ENCODE measurements at regions of chr4 and their contacts with region 1.

Region 1: DNA sequence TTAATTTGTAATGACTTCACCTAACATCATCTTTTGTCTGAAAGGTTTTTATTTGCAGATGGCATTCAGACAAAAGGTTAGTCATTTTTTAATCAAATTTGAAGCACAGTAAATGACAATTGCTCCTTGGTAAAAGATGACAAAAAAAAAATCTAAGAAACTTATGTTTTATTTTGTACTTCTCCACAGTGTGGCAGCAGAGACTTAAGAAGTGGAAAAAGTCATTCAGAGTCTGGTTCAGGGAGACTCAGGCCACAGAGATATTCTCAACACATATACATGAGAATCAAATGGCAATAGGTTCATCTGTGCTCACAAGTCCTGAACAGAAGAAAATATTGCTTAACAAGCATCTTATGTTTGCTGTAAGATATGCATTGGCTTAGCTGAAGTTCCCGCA is 436.2 kb downstream of the KCNIP4 start:
- DNase-seq: peak; percentile 4
- ATAC-seq: peak; percentile 53
- H3K4me3 ChIP-seq: no peak overlapping the region
- H3K27ac ChIP-seq: no peak overlapping the region
- H3K4me1 ChIP-seq: no peaks in the 10 kb centered on the region
- H3K27me3 ChIP-seq: no peaks in the 10 kb centered on the region
- CTCF ChIP-seq: peak in 2 of 3 experiments; percentile 41 to 44; a peak in 3 of 6 replicates
- POLR2A ChIP-seq: no peak
- RAD21 ChIP-seq: peak; percentile 57

Region 2: DNA sequence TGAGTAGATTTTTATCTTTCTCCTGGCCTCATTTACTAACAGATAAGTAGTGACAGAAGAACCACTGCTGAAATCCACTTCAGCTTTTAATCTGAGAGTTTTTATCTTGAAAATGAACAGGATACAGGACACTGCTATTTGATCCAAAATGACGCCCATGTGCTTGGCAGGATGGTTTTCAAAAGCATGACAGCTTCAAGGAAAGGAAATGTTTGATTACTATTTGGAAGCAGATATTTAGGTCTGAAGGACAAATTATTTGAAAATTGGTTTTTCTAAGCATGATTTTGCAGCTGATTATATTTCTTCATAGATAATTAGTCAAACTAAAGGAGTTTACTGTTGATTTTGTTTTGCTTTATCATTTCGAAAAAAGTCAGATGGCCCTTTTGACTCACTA is 801.0 kb before region 1 on chr4:
- CTCF ChIA-PET with region 1: no interaction called
- POLR2A ChIA-PET with region 1: no interaction called
- RAD21 ChIA-PET with region 1: no interaction called
- intact Hi-C with region 1: no loop called
- DNase-seq: no peak
- ATAC-seq: no peak
- H3K4me3 ChIP-seq: no peak overlapping the region
- H3K27ac ChIP-seq: no peak overlapping the region
- H3K4me1 ChIP-seq: no peaks in the 10 kb centered on the region
- H3K27me3 ChIP-seq: no peaks in the 10 kb centered on the region
- CTCF ChIP-seq: no peak
- POLR2A ChIP-seq: no peak
- RAD21 ChIP-seq: no peak

Region 3: DNA sequence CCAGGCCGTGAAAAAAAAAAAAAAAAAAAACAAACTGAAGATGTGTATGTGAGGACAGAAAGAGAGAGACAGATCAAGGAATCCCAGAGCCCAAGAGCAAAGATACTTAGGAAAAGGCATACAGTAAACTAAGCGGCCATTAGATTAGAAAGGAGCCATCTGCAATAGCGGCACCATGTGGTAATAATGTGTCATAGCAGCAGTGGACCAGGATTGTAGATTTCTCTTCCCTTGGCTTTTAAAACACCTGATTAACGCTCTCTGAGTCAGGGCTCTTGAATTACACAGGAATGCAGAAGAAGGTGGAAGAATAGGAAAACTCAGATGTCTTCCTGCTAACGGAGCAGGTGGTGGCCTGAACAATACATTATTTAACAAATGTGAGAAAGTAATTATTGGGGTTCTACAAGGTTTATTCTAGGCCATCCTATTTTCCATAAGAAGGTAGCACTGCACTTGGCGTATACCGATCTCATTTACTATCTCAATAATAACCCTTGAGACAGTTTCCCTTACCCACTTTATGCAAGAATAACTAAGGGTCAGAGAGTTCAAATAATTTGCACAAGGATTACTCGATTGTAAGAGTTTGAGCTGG is 253.6 kb after region 1 on chr4:
- CTCF ChIA-PET with region 1: no interaction called
- POLR2A ChIA-PET with region 1: no interaction called
- RAD21 ChIA-PET with region 1: no interaction called
- intact Hi-C with region 1: loop called (anchors 1 kb)
- DNase-seq: peak; percentile 18
- ATAC-seq: peak; percentile 74
- H3K4me3 ChIP-seq: no peak overlapping the region
- H3K27ac ChIP-seq: no peak overlapping the region
- H3K4me1 ChIP-seq: no peaks in the 10 kb centered on the region
- H3K27me3 ChIP-seq: no peaks in the 10 kb centered on the region
- CTCF ChIP-seq: peak; percentile 41 to 91 (median 80); a peak in 5 of 6 replicates
- POLR2A ChIP-seq: no peak
- RAD21 ChIP-seq: peak; percentile 54

Measured in HCT116 (cell line).